ENCODE measurements at regions of chr14 and their contacts with region 1.

Region 1: DNA sequence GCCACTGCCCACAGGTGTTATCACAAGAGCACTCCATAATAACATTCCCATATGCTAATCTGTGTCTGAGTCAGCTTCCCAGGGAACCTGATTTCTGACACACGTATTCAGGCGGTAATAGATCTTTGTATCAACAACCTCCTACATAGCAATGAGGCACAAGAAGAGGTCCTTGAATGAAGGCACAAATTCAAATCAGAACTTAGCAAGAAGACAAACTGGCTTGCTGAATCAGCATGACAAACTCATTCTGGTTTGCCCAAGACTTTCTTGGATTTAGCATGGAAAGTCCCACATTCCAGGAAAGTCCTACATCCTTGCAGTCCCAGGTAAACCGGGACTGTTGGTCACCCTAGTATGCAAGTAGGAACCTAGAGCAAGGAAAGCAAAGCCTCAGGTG is 33.9 kb upstream of the RNU6-7 start:
- DNase-seq: peak; percentile 58
- H3K4me3 ChIP-seq: no peak overlapping the region
- H3K27ac ChIP-seq: no peak overlapping the region
- H3K4me1 ChIP-seq: no peaks in the 10 kb centered on the region
- H3K27me3 ChIP-seq: no peaks in the 10 kb centered on the region
- CTCF ChIP-seq: no peak

Region 2: DNA sequence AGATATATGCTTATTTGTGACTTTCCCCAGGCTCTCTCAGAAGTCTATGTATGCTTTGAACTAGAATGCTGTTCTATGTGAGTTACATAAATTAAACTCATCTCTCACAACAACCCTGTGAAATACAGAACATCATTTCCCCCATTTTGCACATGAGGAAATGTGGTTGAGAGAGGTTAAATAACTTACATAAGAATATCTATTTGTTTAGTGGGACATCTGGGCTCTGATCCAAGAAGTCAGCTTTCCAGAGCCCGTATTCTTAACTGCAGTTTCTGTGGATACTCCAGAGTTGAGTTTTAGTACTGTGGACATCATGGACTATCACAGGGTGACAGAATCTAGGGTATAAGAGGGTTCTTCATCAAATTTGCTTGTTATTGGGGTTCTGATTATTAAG is 333.3 kb before region 1 on chr14:
- CTCF ChIA-PET with region 1: no interaction called
- dilution Hi-C with region 1: loop called (anchors 10 kb)
- in situ Hi-C with region 1: no loop called
- intact Hi-C with region 1: no loop called
- DNase-seq: peak; percentile 10
- H3K4me3 ChIP-seq: no peak overlapping the region
- H3K27ac ChIP-seq: no peak overlapping the region
- H3K4me1 ChIP-seq: peaks cover 5% of the 10 kb centered on the region
- H3K27me3 ChIP-seq: no peaks in the 10 kb centered on the region
- CTCF ChIP-seq: no peak

Region 3: DNA sequence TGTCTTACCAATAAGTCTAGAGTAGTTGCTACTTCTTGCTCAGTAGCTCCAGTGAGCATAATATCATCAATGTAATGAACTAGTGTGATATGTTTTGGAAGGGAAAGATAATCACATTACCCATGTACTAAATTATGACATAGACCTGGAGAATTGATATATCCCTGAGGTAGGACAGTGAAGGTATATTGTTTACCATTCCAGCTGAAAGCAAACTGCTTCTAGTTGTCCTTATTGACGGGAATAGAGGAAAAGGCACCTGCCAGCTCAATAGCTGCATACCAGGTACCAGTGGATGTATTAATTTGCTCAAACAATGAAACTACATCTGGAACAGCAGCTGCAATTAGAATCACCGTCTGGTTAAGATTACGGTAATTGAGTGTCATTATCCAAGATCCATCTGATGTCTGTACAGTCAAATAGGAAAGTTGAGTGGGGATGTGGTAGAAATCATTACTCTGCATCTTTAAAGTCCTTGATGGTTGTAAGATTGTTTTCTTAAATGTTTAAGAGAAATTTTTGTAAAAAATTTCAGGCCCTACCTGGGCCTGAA is 190.8 kb before region 1 on chr14:
- CTCF ChIA-PET with region 1: no interaction called
- dilution Hi-C with region 1: no loop called
- in situ Hi-C with region 1: no loop called
- intact Hi-C with region 1: no loop called
- DNase-seq: no peak
- H3K4me3 ChIP-seq: no peak overlapping the region
- H3K27ac ChIP-seq: no peak overlapping the region
- H3K4me1 ChIP-seq: no peaks in the 10 kb centered on the region
- H3K27me3 ChIP-seq: no peaks in the 10 kb centered on the region
- CTCF ChIP-seq: no peak

Region 4: GRCh38 chr14:32134448-32135070 is 33.3 kb before region 1 on chr14:
- CTCF ChIA-PET with region 1: no interaction called
- dilution Hi-C with region 1: no loop called
- in situ Hi-C with region 1: no loop called
- intact Hi-C with region 1: no loop called
- DNase-seq: peak; percentile 52
- H3K4me3 ChIP-seq: no peak overlapping the region
- H3K27ac ChIP-seq: no peak overlapping the region
- H3K4me1 ChIP-seq: no peaks in the 10 kb centered on the region
- H3K27me3 ChIP-seq: no peaks in the 10 kb centered on the region
- CTCF ChIP-seq: no peak

Region 5: GRCh38 chr14:32230695-32231280 is 62.9 kb after region 1 on chr14:
- CTCF ChIA-PET with region 1: no interaction called
- dilution Hi-C with region 1: loop called (anchors 5 kb)
- in situ Hi-C with region 1: no loop called
- intact Hi-C with region 1: no loop called
- DNase-seq: peak; percentile 64
- H3K4me3 ChIP-seq: no peak overlapping the region
- H3K27ac ChIP-seq: peak overlapping the region; percentile 64
- H3K4me1 ChIP-seq: peaks cover 41% of the 10 kb centered on the region
- H3K27me3 ChIP-seq: no peaks in the 10 kb centered on the region
- CTCF ChIP-seq: no peak

Region 6: DNA sequence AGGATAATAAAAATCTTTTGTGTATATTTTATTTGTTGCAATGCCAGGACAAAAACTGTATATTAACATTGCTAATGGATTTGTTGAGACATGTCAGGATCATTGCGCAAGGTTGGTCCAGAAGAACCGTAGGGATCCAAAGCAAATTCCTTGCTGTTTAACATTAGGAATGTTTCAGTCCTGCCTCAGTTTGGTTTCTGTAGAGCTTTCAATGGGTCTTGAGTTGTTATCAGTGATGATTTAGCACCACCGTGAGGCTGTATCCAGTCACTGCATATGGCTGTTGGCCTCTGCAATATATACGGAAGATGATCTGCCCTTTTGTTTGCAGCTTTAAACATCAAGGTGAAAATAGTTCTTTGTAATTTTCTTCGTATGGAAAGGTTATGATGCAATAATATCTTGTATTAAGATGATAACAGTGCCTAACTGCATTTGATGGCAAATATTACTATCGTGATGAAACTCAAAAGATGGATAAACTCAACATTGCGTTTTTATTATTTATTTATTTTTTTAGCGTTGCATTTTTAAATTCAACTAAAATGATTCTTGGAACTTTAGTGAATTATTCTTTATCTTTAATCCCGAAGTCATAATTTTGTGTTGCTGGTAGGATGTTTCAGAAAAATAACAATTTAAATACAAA is 392.4 kb after region 1 on chr14:
- CTCF ChIA-PET with region 1: no interaction called
- dilution Hi-C with region 1: no loop called
- in situ Hi-C with region 1: no loop called
- intact Hi-C with region 1: loop called (anchors 10 kb)
- DNase-seq: peak; percentile 74
- H3K4me3 ChIP-seq: no peak overlapping the region
- H3K27ac ChIP-seq: peak overlapping the region; percentile 53
- H3K4me1 ChIP-seq: peaks cover 19% of the 10 kb centered on the region
- H3K27me3 ChIP-seq: no peaks in the 10 kb centered on the region
- CTCF ChIP-seq: peak; percentile 84 to 98

Measured in mammary epithelial cell (primary cell).